Stomach (tissue), 19 donors: ENCODE measurements at regions of chr2 and their contacts with region 1.

Region 1: DNA sequence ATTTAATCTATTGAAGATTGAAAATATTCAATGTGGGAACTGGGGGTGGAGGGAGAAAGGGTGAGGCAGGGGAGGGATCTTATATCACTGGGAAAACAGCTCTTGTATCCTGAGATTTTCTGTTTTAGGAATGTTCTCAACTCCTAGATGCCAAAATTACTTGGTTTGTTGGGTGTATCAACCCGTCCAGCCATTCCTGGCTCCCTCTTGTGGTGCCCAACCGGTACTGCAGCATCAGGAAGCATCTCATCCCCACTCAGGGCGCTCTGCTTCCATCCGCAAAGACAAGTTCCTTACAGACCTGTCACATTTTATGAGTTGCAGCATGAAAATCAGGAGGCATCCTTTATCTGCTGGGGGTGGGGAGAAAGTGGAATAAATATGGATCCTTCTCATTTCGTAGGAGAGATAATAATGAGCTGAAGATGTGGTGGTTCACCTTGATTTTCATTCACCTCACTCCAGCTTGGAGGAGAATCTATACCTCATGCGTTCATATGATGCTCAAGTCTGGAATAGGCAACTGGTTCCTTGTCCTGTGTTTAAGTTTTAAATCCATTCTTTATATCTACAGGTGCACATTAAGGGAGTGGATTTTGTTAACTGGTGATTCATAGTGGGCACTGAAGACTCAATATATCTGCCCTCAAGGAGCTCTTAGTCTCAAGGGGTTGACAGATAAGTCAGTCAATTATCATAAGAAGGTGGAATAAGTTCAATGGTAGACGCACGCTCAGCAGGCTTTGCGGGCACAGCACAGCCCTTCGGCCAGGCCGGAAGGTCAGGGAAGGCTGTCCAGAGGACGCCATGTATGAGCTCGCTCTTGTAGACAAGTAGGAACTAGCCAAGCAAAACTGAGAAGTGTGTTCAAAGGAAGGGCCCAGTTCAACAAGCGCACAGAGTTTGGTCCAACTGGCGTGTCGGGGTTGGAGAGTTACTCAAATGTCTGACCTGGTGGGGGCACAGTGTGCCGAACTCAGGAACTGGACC is 127.3 kb downstream of the RNF144A start:
- DNase-seq: peak; percentile 76 to 79
- H3K4me3 ChIP-seq: no peak overlapping the region
- H3K27ac ChIP-seq: no peak overlapping the region
- H3K4me1 ChIP-seq: peaks cover 0 to 6% (median 0%) of the 10 kb centered on the region in 4 donors
- H3K27me3 ChIP-seq: no peaks in the 10 kb centered on the region
- CTCF ChIP-seq: peak in 5 of 7 experiments; percentile 64 to 96 (median 91)
- EP300 ChIP-seq: no peak
- POLR2A ChIP-seq: no peak

Region 2: GRCh38 chr2:6896930-6897759 is 147.4 kb before region 1 on chr2:
- intact Hi-C with region 1: loop called (anchors 5 kb)
- DNase-seq: peak in 1 of 2 donors; percentile 67
- H3K4me3 ChIP-seq: no peak overlapping the region
- H3K27ac ChIP-seq: no peak overlapping the region
- H3K4me1 ChIP-seq: no peaks in the 10 kb centered on the region
- H3K27me3 ChIP-seq: no peaks in the 10 kb centered on the region
- CTCF ChIP-seq: peak in 5 of 7 experiments; percentile 49 to 67 (median 65)
- EP300 ChIP-seq: no peak
- POLR2A ChIP-seq: no peak

Region 3: DNA sequence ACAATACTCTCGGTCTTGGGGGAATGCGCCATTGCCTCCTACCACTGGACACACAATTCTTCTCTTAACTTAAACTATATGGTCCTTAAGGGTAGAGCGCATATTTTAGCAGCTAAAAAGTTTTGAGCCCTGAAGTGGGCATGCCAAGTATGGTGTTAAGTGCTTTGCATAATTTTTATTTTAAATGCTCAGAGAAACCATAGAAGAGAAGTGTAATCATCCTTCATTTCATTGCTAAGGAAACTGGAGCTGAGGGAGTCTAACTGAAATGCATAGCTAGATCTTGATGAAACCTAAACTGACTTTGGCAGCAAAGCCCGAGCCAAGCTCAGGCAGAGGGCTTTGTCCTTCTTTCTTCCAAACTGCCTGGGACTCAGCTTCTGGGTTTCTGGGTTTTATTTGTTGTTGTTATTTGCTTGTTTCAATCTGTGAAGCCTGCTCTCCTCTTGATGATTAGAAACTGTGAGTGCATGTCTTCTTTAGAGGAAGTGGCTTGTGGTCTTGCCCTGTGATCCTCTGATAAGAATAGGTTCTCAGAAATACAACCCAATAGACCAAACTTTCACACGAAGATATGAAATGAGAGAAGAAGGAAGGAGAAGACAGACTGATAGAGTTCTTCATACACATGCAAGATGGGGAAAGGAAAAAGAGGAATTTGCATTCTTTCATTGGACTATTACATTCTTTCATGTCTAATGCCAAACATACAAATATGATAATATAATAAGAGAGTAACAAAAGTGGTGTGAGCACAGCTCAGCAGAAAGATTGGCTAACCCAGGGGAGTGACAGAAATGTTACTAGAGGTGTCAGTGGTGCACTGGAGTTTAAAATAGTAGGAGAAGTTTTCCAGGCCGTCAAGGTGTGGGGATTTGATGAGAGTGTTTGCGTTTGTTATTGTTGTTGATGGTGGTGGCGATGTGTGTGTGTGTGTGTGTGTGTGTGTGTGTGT is 134.8 kb before region 1 on chr2:
- intact Hi-C with region 1: loop called (anchors 5 kb)
- DNase-seq: no peak
- H3K4me3 ChIP-seq: no peak overlapping the region
- H3K27ac ChIP-seq: no peak overlapping the region
- H3K4me1 ChIP-seq: no peaks in the 10 kb centered on the region
- H3K27me3 ChIP-seq: no peaks in the 10 kb centered on the region
- CTCF ChIP-seq: no peak
- EP300 ChIP-seq: no peak
- POLR2A ChIP-seq: no peak